Psoas muscle (tissue), 8 donors: ENCODE measurements at regions of chr1 and their contacts with region 1.

Region 1: GRCh38 chr1:220380885-220381284 is 108.6 kb upstream of the RAB3GAP2 start:
- DNase-seq: no peak
- ATAC-seq: no peak
- H3K4me3 ChIP-seq: no peak overlapping the region
- H3K27ac ChIP-seq: no peak overlapping the region
- H3K4me1 ChIP-seq: no peaks in the 10 kb centered on the region
- H3K27me3 ChIP-seq: no peaks in the 10 kb centered on the region
- CTCF ChIP-seq: no peak

Region 2: DNA sequence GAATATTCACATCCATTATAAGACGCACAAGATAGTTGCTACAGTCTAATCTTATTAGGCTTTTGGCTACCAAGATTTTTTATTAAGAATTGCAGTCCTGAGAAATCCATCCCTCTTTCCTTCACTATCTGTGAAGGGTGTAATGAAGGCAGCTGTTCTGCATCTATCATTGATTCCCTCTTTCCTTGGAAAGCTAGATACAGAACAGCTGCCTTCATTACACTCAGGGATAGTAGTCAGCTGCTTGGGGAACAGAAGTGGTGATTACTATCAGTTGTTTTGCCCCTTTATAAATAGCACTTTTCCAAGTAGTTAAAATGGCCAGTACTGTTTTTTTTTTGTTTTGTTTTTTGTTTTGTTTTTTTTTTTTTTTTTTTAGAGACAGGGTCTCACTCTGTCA is 216.8 kb before region 1 on chr1:
- intact Hi-C with region 1: no loop called
- DNase-seq: no peak
- ATAC-seq: no peak
- H3K4me3 ChIP-seq: no peak overlapping the region
- H3K27ac ChIP-seq: no peak overlapping the region
- H3K4me1 ChIP-seq: no peaks in the 10 kb centered on the region
- H3K27me3 ChIP-seq: no peaks in the 10 kb centered on the region
- CTCF ChIP-seq: no peak

Region 3: GRCh38 chr1:221327954-221328353 is 947.1 kb after region 1 on chr1:
- intact Hi-C with region 1: loop called in 1 of 2 experiments (anchors 10 kb)
- DNase-seq: no peak
- ATAC-seq: no peak
- H3K4me3 ChIP-seq: no peak overlapping the region
- H3K27ac ChIP-seq: no peak overlapping the region
- H3K4me1 ChIP-seq: no peaks in the 10 kb centered on the region
- H3K27me3 ChIP-seq: no peaks in the 10 kb centered on the region
- CTCF ChIP-seq: no peak